Heart left ventricle (tissue), 16 donors: ENCODE measurements at regions of chr12 and their contacts with region 1.

Region 1: DNA sequence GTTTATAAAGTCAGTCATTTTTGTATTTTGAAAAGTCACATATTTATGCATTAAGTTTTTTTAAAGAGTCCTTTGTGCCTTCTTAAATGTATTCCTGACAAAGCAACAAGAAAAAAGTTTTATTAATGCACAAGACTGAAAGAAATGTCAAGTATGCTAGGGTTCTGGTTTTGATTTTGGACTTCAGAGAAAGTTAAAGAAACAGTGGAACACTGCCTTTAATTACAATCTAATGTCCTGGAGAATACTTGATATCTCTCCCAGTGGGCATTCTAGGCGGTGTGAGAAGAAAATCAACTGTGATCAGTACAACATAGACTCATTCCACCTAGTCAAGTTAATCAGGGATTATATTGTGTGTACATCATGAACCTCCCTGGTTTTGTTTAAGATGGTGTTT is 49.9 kb downstream of the PRICKLE1 start:
- DNase-seq: no peak
- ATAC-seq: no peak
- H3K4me3 ChIP-seq: no peak overlapping the region
- H3K27ac ChIP-seq: no peak overlapping the region
- H3K4me1 ChIP-seq: peaks cover 0 to 6% (median 0%) of the 10 kb centered on the region in 12 donors
- H3K27me3 ChIP-seq: no peaks in the 10 kb centered on the region
- CTCF ChIP-seq: no peak
- POLR2A ChIP-seq: no peak

Region 2: DNA sequence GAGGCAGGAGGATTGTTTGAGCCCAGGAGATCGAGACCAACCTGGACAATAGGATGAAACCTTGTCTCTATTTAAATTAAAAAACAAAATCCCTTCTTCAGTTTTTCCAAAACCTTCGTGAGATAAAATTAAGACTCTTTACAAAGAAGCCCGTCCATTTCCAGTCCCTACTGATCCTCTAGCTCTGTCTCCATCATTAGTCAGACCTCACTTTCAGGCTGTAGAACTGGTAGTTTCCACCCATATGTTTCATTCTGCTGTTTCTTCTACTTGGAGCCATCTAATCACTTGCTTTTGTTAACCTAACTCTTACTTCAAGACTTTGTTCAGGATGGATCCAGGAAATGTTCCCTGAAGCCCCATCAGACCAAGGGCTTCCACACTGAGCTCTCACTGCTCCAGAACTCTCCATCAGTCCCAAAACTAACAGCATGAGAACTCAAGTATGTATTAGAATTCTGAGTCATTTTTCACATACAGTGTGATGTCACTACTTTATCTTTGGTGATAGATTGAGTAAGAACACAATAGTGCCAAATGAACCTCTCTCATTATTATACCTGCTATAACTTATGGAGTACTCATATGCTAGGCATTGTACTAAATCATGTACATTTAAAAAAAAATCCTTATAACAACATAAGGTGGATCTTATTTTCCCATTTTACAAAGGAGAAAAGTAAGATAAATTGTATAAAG is 41.0 kb before region 1 on chr12:
- intact Hi-C with region 1: loop called in 1 of 10 experiments (anchors 10 kb)
- DNase-seq: no peak
- ATAC-seq: peak in 1 of 4 donors; percentile 28
- H3K4me3 ChIP-seq: no peak overlapping the region
- H3K27ac ChIP-seq: no peak overlapping the region
- H3K4me1 ChIP-seq: peaks cover 0 to 5% (median 0%) of the 10 kb centered on the region in 12 donors
- H3K27me3 ChIP-seq: no peaks in the 10 kb centered on the region
- CTCF ChIP-seq: no peak
- POLR2A ChIP-seq: no peak

Region 3: DNA sequence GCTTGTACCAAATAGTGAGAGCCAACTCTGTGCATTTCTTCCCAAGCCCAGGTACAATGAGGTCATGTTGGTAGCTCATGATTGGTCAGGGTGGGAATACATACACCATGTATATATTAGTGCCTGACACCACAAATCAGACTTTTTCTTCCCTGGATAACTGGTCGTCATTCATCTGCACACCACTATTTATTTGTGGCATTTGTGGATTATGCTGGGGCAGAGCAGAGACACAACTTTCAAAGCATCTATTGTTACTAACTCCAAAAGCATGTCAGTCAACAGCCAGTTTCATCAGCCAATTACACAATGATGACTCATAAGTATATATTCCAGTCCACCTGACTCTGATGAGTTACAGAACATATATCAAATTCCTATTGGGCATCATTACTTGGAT is 830.6 kb after region 1 on chr12:
- intact Hi-C with region 1: no loop called
- DNase-seq: no peak
- ATAC-seq: no peak
- H3K4me3 ChIP-seq: no peak overlapping the region
- H3K27ac ChIP-seq: no peak overlapping the region
- H3K4me1 ChIP-seq: no peaks in the 10 kb centered on the region
- H3K27me3 ChIP-seq: no peaks in the 10 kb centered on the region
- CTCF ChIP-seq: no peak
- POLR2A ChIP-seq: no peak